PC-3 (cell line): ENCODE measurements at regions of chr6 and their contacts with region 1.

Region 1: GRCh38 chr6:16669227-16669626 is 92.0 kb downstream of the ATXN1 start:
- DNase-seq: peak; percentile 93
- ATAC-seq: peak; percentile 86
- H3K4me3 ChIP-seq: no peak overlapping the region
- H3K27ac ChIP-seq: peak overlapping the region; percentile 82
- H3K4me1 ChIP-seq: peaks cover 42% of the 10 kb centered on the region
- H3K27me3 ChIP-seq: no peaks in the 10 kb centered on the region
- CTCF ChIP-seq: no peak

Region 2: GRCh38 chr6:16568128-16568527 is 101.1 kb before region 1 on chr6:
- CTCF ChIA-PET with region 1: no interaction called
- POLR2A ChIA-PET with region 1: no interaction called
- intact Hi-C with region 1: no loop called
- DNase-seq: no peak
- ATAC-seq: no peak
- H3K4me3 ChIP-seq: no peak overlapping the region
- H3K27ac ChIP-seq: no peak overlapping the region
- H3K4me1 ChIP-seq: peaks cover 5% of the 10 kb centered on the region; the same call in 1 of the 2 replicates
- H3K27me3 ChIP-seq: no peaks in the 10 kb centered on the region
- CTCF ChIP-seq: no peak

Region 3: GRCh38 chr6:16635810-16636602 is 33.2 kb before region 1 on chr6:
- CTCF ChIA-PET with region 1: no interaction called
- POLR2A ChIA-PET with region 1: no interaction called
- intact Hi-C with region 1: loop called (anchors 1 kb)
- DNase-seq: peak; percentile 91
- ATAC-seq: peak; percentile 76
- H3K4me3 ChIP-seq: peak overlapping the region; percentile 43
- H3K27ac ChIP-seq: peak overlapping the region; percentile 91
- H3K4me1 ChIP-seq: peaks cover 47% of the 10 kb centered on the region
- H3K27me3 ChIP-seq: no peaks in the 10 kb centered on the region
- CTCF ChIP-seq: no peak